ENCODE measurements at regions of chr2 and their contacts with region 1.

Region 1: GRCh38 chr2:88190808-88191721 is 20.9 kb downstream of the THNSL2 start:
- DNase-seq: peak; percentile 49
- H3K4me3 ChIP-seq: no peak overlapping the region
- H3K27ac ChIP-seq: no peak overlapping the region
- H3K4me1 ChIP-seq: no peaks in the 10 kb centered on the region
- H3K27me3 ChIP-seq: no peaks in the 10 kb centered on the region
- CTCF ChIP-seq: peak; percentile 75

Region 2: GRCh38 chr2:88067189-88067588 is 123.9 kb before region 1 on chr2:
- CTCF ChIA-PET with region 1: no interaction called
- POLR2A ChIA-PET with region 1: no interaction called
- intact Hi-C with region 1: no loop called
- DNase-seq: no peak
- H3K4me3 ChIP-seq: no peak overlapping the region
- H3K27ac ChIP-seq: no peak overlapping the region
- H3K4me1 ChIP-seq: no peaks in the 10 kb centered on the region
- H3K27me3 ChIP-seq: no peaks in the 10 kb centered on the region
- CTCF ChIP-seq: no peak

Region 3: GRCh38 chr2:88148929-88149438 is 42.1 kb before region 1 on chr2:
- CTCF ChIA-PET with region 1: interaction called, 15 read pairs
- POLR2A ChIA-PET with region 1: no interaction called
- intact Hi-C with region 1: no loop called
- DNase-seq: no peak
- H3K4me3 ChIP-seq: no peak overlapping the region
- H3K27ac ChIP-seq: no peak overlapping the region
- H3K4me1 ChIP-seq: no peaks in the 10 kb centered on the region
- H3K27me3 ChIP-seq: peaks cover 4% of the 10 kb centered on the region
- CTCF ChIP-seq: no peak

Region 4: DNA sequence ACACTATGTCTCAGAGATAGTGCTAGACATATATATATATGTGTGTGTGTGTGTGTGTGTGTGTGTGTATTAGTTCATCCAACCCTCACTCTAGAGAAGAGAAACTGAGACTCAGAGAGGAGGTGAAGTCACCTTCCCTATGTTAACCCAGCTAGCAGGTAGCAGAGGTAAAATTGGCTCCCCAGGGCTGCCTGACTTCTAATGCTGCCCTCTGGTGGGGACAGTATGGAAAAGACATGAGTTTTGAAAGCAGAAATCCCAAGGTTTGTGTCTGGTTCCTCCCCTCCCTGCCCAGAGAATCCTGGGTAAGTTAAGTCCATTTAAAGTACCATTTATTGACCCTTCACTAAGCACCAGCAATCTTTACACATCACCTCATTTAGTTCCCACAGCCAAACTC is 116.8 kb after region 1 on chr2:
- CTCF ChIA-PET with region 1: no interaction called
- POLR2A ChIA-PET with region 1: no interaction called
- intact Hi-C with region 1: loop called (anchors 5 kb)
- DNase-seq: peak; percentile 33
- H3K4me3 ChIP-seq: no peak overlapping the region
- H3K27ac ChIP-seq: no peak overlapping the region
- H3K4me1 ChIP-seq: no peaks in the 10 kb centered on the region
- H3K27me3 ChIP-seq: no peaks in the 10 kb centered on the region
- CTCF ChIP-seq: peak; percentile 64

Region 5: DNA sequence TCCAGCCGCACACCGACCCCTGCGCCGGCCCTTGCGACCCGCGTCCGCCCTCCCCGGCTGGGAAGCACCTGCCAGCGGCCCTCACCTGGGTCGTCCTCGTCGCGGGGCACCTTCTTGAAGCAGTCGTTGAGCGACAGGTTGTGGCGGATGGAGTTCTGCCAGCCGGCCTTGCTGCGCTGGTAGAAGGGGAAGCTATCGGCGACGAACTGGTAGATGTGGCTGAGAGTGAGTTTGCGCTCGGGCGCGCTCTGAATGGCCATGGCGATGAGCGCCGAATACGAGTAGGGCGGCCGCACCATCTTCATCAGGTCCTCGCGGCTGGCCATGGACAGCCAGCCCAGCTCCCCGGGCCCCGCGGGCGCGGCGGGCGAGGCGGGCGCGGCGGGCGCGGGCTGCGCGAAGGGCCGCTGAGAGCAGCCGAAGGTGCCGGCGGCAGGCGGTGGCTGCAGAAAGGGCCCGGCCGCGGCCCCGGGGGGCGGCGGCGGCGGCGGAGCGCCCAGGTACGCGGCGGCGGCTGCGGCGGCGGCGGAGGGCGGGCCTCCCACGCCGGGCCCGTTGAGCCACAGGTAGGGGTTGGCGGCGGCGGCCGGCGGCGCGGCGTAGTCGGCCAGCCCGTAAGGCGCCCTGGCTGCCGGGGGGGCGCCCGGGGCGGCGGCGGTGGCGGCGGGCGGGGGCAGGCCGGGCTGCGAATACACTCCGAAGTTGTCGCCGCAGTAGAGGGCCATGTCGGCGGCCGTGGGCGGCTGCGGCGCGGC is 260.9 kb after region 1 on chr2:
- CTCF ChIA-PET with region 1: no interaction called
- POLR2A ChIA-PET with region 1: no interaction called
- intact Hi-C with region 1: loop called (anchors 10 kb)
- DNase-seq: no peak
- H3K4me3 ChIP-seq: no peak overlapping the region
- H3K27ac ChIP-seq: no peak overlapping the region
- H3K4me1 ChIP-seq: no peaks in the 10 kb centered on the region
- H3K27me3 ChIP-seq: peaks cover 92% of the 10 kb centered on the region
- CTCF ChIP-seq: no peak

Region 6: DNA sequence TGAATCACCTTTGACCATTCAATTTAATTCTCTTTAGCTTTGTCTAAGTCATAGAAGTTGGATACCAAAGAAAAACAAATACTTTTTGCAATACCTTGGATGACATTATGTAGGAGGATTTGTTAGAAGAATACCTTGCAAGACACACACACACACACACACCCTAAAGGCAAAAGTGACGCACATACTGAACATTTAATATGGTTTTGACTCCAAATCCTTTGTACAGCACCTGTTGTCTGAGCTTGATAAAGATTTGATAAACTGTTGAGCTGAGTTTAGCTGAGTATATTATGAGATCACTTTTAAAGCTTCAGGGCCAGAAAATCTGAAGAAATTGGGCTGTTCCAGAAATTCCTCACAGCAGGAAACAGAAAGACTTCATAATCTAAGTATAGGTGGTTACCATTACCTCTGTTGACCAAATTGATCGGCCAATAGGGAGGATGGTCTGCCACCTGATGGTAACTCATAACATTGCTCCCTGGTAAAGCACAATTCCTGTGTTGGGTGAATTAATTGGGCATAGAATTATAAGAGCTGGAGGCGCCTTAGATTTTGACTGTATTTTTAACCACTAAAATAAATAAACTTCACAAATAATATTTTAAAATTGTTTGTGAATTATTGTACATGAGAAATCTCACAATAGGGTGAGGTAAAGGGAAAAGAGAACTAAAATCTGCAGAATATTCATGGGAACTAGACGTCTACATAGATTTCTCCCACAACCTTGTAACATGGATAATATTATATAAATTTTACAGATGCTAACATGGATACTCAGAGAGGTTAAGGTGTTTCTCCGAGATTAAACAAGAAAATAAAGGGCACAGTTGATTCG is 478.5 kb after region 1 on chr2:
- CTCF ChIA-PET with region 1: no interaction called
- POLR2A ChIA-PET with region 1: no interaction called
- intact Hi-C with region 1: loop called (anchors 5 kb)
- DNase-seq: peak; percentile 60
- H3K4me3 ChIP-seq: no peak overlapping the region
- H3K27ac ChIP-seq: no peak overlapping the region
- H3K4me1 ChIP-seq: no peaks in the 10 kb centered on the region
- H3K27me3 ChIP-seq: peaks cover 5% of the 10 kb centered on the region
- CTCF ChIP-seq: peak; percentile 69

Measured in A673 (cell line).